Breast epithelium (tissue), 4 donors: ENCODE measurements at regions of chr7 and their contacts with region 1.

Region 1: GRCh38 chr7:106418094-106418493 is 133.3 kb upstream of the NAMPT start:
- DNase-seq: peak in 1 of 2 donors; percentile 42
- H3K4me3 ChIP-seq: no peak overlapping the region
- H3K27ac ChIP-seq: peak overlapping the region; percentile 73 to 88
- H3K4me1 ChIP-seq: peaks cover 7 to 11% of the 10 kb centered on the region in 2 donors
- H3K27me3 ChIP-seq: no peaks in the 10 kb centered on the region
- CTCF ChIP-seq: no peak
- POLR2A ChIP-seq: no peak

Region 2: DNA sequence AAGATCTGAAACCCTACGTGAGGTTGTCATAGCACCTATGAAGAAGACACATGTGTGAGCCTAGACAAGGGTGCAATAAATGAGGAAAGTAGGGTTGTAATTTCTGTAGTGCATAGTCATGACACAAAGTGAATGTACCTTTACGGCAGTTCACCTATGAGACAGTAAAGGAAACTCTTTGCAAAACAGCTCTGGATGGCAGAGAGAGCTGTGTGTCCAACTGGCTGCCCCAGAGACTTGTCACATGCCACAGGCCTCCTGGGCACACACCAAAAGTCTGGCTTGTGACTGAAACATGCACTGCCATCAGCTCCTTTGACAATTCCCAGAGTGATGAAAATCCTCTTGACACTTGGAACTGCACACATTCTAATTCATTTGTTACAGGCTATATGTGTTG is 42.6 kb before region 1 on chr7:
- intact Hi-C with region 1: loop called (anchors 2 kb)
- DNase-seq: no peak
- H3K4me3 ChIP-seq: no peak overlapping the region
- H3K27ac ChIP-seq: no peak overlapping the region
- H3K4me1 ChIP-seq: no peaks in the 10 kb centered on the region
- H3K27me3 ChIP-seq: no peaks in the 10 kb centered on the region
- CTCF ChIP-seq: no peak
- POLR2A ChIP-seq: no peak